ENCODE measurements at regions of chr4 and their contacts with region 1.

Region 1: GRCh38 chr4:85968945-85969819 is 390.7 kb downstream of the MAPK10 start:
- DNase-seq: no peak
- ATAC-seq: peak; percentile 68

Region 2: DNA sequence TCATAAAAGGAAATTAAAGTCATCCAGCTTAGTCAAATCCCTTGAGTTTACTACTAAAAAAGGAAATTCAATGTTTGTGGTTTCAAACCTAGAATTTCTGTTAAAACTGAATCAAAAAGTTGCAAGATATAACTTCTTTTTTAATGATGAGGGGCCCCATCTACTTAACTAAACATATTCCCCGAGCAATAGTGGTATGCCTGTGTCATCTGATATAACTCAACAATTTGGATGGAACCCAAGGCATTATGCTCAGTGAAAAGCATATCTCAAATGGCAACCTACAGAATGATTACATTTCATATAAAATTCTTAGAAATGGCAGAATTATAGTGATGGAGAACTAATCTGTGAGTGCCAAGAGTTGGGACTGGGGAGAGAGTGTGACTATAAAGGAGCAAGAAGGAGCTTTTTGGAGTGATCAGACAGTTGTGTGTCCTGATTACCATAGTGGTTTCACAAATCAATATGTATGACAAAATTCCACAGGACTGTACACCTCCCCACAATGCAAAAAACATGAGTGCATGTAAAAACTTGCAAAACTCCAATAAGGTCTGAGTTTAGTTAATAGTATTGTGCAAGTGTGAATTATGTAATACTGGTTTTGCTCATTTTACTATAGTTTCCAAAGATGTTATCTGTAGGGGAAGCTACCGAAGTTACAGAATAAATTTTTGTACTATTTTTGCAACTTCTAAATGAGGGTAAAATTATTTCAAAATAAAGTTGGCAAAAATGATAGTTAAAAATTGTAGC is 171.0 kb before region 1 on chr4:
- intact Hi-C with region 1: loop called (anchors 5 kb)
- DNase-seq: no peak
- ATAC-seq: no peak